ENCODE measurements at regions of chr1 and their contacts with region 1.

Region 1: GRCh38 chr1:36099681-36100341 is 11.1 kb downstream of the ADPRS start:
- DNase-seq: peak; percentile 90
- CTCF ChIP-seq: peak; percentile 88

Region 2: GRCh38 chr1:35902671-35903070 is 197.1 kb before region 1 on chr1:
- in situ Hi-C with region 1: no loop called
- DNase-seq: no peak
- CTCF ChIP-seq: no peak

Region 3: GRCh38 chr1:35930593-35931445 is 169.0 kb before region 1 on chr1 and contains the start of gene AGO3:
- in situ Hi-C with region 1: no loop called
- DNase-seq: peak; percentile 95
- CTCF ChIP-seq: no peak

Region 4: DNA sequence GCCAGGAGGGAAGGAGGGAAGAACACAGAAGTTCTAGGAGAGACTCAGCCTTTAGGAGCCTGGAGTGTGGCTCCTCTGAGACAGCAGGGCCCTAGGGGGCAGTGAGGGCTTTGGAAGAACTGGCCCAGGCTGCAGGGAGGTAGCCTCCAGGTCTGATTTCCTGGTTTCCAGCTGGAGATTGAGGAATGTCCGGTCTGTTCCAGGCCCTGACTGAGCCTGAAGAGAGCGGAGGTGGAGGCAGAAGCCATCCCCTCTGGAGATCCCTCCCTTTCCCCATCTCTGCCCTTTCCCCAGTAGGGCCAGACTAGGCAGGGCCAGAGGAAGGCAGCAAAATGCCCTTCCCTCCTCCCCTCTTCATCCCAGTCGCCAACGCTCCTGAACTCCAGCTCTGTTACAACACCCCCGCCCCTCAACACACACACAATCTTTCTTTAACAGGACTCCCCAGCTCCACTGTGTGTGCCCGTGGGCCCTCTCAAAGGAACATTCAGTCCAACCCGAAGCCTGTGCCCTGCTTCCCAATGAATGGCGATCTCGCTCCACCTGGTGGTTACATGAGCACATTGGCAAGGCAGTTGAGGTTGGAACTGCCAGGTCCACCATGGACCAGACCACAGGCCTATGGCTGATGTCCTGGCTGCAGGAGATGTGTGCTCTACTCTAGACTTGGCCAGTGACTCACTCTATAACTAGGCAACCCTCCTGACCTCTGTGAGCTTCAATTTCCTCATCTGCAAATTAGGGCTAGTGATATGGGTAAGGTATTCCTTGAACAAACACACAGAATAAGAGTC is 88.2 kb after region 1 on chr1:
- in situ Hi-C with region 1: loop called (anchors 10 kb)
- DNase-seq: peak; percentile 84
- CTCF ChIP-seq: peak; percentile 96